ENCODE measurements at regions of chr7 and their contacts with region 1.

Region 1: DNA sequence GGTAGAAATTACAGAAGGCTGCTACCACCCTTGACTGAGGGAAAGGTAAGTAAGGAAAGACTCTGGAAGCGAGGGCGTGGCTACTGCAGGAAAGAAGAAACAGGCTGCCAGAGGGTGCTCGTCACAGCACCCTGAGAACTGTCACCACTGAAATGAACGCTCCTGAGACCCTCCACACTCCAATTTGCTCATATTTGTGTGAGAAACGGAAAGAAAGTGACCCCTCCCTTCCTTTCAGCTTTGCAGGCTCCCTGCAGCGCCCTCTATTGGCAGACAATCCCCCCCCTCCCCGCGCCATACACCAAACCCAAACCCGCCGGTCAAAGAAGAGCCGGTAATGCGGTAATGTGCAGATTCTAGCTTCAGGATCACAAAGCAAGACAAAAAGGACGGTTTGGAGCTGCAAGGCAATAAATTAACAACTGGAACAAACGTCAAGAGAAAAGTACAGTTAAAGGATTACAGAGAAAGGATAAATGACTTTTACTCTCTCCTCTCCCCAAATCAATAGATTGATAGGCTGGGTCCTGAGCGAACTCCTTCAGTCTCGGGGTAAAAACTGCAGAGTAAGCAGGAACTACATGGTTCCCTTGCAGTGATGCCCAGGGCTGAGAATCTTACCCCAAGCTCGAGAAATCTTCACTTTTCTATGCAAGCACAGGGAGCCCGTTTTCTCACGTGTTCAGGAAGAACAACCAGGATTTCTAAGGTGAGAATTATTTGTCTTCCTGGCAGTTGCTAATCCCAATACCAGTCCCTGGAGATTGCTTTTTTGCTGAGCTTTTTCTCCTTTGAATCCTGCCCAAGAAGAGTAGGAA is 47.6 kb downstream of the STEAP1B start:
- DNase-seq: peak; percentile 59
- ATAC-seq: peak; percentile 65 to 88

Region 2: GRCh38 chr7:22302951-22303423 is 149.4 kb before region 1 on chr7:
- intact Hi-C with region 1: loop called in 1 of 2 experiments (anchors 10 kb)
- DNase-seq: no peak
- ATAC-seq: no peak

Region 3: DNA sequence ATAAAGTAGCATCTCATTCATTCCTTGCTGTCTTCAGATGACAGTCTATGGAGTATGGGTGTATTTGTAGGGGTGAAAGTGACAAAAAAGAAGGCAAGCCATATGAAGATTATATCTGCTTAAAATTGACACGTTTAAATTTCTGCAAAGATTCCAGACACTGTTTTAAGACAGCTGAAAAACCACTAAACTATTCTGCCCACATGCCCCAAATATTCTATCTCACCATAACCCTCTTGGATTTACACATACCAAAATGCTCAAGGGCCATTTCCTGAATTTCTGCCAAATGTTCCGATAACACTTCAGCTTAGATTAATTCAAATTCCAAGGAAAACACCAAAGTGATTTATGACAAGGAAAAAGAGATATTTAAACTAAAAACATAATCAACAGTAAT is 174.8 kb after region 1 on chr7:
- intact Hi-C with region 1: no loop called
- DNase-seq: no peak
- ATAC-seq: no peak

Measured in left cardiac atrium (tissue), 4 donors.